ENCODE measurements at regions of chr2 and their contacts with region 1.

Region 1: GRCh38 chr2:102753563-102754159 is 8.2 kb upstream of the TMEM182 start:
- DNase-seq: peak; percentile 33
- H3K4me3 Mint-ChIP-seq: no peak overlapping the region
- H3K27ac Mint-ChIP-seq: no peak overlapping the region
- H3K4me1 Mint-ChIP-seq: no peaks in the 10 kb centered on the region
- H3K27me3 Mint-ChIP-seq: no peaks in the 10 kb centered on the region

Region 2: GRCh38 chr2:102726128-102727087 is 27.3 kb before region 1 on chr2:
- CTCF ChIA-PET with region 1: interaction called, 11 read pairs
- POLR2A ChIA-PET with region 1: no interaction called
- intact Hi-C with region 1: no loop called
- DNase-seq: no peak
- H3K4me3 Mint-ChIP-seq: no peak overlapping the region
- H3K27ac Mint-ChIP-seq: no peak overlapping the region
- H3K4me1 Mint-ChIP-seq: no peaks in the 10 kb centered on the region
- H3K27me3 Mint-ChIP-seq: no peaks in the 10 kb centered on the region

Region 3: GRCh38 chr2:102736410-102737409 is 17.0 kb before region 1 on chr2:
- CTCF ChIA-PET with region 1: interaction called, 59 read pairs
- POLR2A ChIA-PET with region 1: no interaction called
- intact Hi-C with region 1: no loop called
- DNase-seq: peak; percentile 89
- H3K4me3 Mint-ChIP-seq: peak overlapping the region; percentile 98
- H3K27ac Mint-ChIP-seq: peak overlapping the region; percentile 81
- H3K4me1 Mint-ChIP-seq: peaks cover 27% of the 10 kb centered on the region
- H3K27me3 Mint-ChIP-seq: no peaks in the 10 kb centered on the region

Region 4: DNA sequence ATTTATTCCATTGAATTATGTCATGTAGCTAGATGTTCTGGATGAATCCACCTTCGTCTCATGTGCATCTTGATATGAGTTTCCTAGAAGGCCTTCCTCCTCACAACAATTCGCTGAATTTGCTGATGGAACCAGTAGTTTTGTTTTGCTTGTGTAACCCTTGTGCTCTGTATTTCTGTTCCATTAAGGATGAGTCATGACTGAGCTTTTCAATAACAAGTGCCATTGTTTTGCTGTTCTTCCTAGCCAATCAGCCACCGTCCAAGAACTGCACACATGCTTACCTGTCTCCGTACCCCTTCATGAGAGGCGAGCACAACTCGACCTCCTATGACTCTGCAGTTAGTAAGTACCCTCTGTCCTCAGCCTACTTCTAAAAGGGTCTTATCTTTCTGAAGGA is 10.4 kb after region 1 on chr2:
- CTCF ChIA-PET with region 1: interaction called, 24 read pairs
- POLR2A ChIA-PET with region 1: no interaction called
- intact Hi-C with region 1: no loop called
- DNase-seq: no peak
- H3K4me3 Mint-ChIP-seq: no peak overlapping the region
- H3K27ac Mint-ChIP-seq: no peak overlapping the region
- H3K4me1 Mint-ChIP-seq: no peaks in the 10 kb centered on the region
- H3K27me3 Mint-ChIP-seq: no peaks in the 10 kb centered on the region

Region 5: GRCh38 chr2:102773149-102773705 is 19.6 kb after region 1 on chr2:
- CTCF ChIA-PET with region 1: interaction called, 12 read pairs
- POLR2A ChIA-PET with region 1: no interaction called
- intact Hi-C with region 1: no loop called
- DNase-seq: no peak
- H3K4me3 Mint-ChIP-seq: no peak overlapping the region
- H3K27ac Mint-ChIP-seq: no peak overlapping the region
- H3K4me1 Mint-ChIP-seq: no peaks in the 10 kb centered on the region
- H3K27me3 Mint-ChIP-seq: no peaks in the 10 kb centered on the region

Region 6: GRCh38 chr2:102782933-102783332 is 29.3 kb after region 1 on chr2:
- CTCF ChIA-PET with region 1: interaction called, 16 read pairs
- POLR2A ChIA-PET with region 1: no interaction called
- intact Hi-C with region 1: no loop called
- DNase-seq: no peak
- H3K4me3 Mint-ChIP-seq: no peak overlapping the region
- H3K27ac Mint-ChIP-seq: no peak overlapping the region
- H3K4me1 Mint-ChIP-seq: no peaks in the 10 kb centered on the region
- H3K27me3 Mint-ChIP-seq: no peaks in the 10 kb centered on the region

Region 7: GRCh38 chr2:102806250-102806837 is 52.7 kb after region 1 on chr2:
- CTCF ChIA-PET with region 1: interaction called, 99 read pairs
- POLR2A ChIA-PET with region 1: no interaction called
- intact Hi-C with region 1: loop called (anchors 1 kb)
- DNase-seq: peak; percentile 65
- H3K4me3 Mint-ChIP-seq: no peak overlapping the region
- H3K27ac Mint-ChIP-seq: no peak overlapping the region
- H3K4me1 Mint-ChIP-seq: peaks cover 20% of the 10 kb centered on the region
- H3K27me3 Mint-ChIP-seq: peaks cover 3% of the 10 kb centered on the region